ENCODE measurements at regions of chr9 and their contacts with region 1.

Region 1: DNA sequence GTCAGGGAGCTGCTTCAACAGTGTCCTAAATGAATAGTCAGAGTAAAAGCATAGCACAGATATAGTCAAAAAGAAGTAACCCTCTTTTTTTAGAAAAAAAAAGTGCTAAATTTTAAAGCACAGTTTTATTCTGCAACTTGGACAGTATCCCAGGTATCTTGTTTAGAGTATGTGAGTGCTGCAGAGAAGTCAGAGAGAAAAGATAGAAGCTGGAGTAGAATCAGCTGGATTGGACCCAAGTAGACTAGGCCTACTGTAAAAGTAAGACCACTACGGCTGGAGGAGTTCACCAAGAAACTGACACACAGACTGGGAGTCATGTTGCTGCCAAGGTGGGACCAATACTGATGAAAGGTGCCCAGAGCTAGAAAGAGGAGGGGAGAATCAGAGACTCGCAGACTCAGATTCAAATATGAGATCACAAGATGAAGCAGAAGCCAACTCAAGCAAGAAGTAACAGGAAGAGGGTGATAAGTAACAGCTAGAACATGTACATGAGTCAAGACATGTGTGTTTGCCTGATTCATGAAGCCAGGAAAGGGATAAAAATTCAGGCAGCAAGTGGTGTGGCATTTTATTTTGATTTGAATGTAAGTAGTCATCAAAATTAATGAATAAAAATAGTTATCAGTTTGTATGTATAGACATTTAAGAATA is 25.6 kb upstream of the TUSC1 start:
- DNase-seq: no peak
- H3K4me3 ChIP-seq: no peak overlapping the region
- H3K27ac ChIP-seq: peak overlapping the region in 1 of 2 donors; percentile 27
- H3K4me1 ChIP-seq: no peaks in the 10 kb centered on the region
- H3K27me3 ChIP-seq: no peaks in the 10 kb centered on the region
- CTCF ChIP-seq: no peak

Region 2: DNA sequence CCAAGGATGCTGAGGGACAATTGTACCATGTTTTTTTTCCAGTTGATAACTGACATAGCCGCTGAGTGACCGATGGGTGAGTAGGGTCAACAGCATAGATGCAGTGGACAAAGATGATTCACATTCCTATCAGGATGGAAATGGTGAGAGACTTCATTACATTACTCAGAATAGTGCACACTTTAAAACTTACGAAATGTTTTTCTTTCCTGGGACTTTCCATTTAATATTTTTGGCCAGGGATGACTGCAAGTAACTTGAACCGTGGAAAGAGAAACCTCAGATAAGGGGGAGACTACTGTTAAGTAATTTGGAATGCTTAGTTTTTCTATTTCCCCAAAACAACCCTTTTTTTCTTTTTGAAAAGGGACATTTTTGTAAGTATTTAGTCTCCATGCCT is 22.6 kb before region 1 on chr9:
- intact Hi-C with region 1: loop called (anchors 2 kb)
- DNase-seq: no peak
- H3K4me3 ChIP-seq: no peak overlapping the region
- H3K27ac ChIP-seq: peak overlapping the region; percentile 23 to 38
- H3K4me1 ChIP-seq: peaks cover 5 to 11% of the 10 kb centered on the region in 2 donors
- H3K27me3 ChIP-seq: no peaks in the 10 kb centered on the region
- CTCF ChIP-seq: no peak

Region 3: GRCh38 chr9:25724424-25724823 is 20.6 kb after region 1 on chr9:
- intact Hi-C with region 1: no loop called
- DNase-seq: no peak
- H3K4me3 ChIP-seq: no peak overlapping the region
- H3K27ac ChIP-seq: no peak overlapping the region
- H3K4me1 ChIP-seq: no peaks in the 10 kb centered on the region
- H3K27me3 ChIP-seq: no peaks in the 10 kb centered on the region
- CTCF ChIP-seq: no peak

Region 4: GRCh38 chr9:25755951-25756350 is 52.1 kb after region 1 on chr9:
- intact Hi-C with region 1: loop called (anchors 10 kb)
- DNase-seq: no peak
- H3K4me3 ChIP-seq: no peak overlapping the region
- H3K27ac ChIP-seq: no peak overlapping the region
- H3K4me1 ChIP-seq: no peaks in the 10 kb centered on the region
- H3K27me3 ChIP-seq: no peaks in the 10 kb centered on the region
- CTCF ChIP-seq: no peak